Activated CD8-positive, alpha-beta T cell treated with anti-CD3 and anti-CD28 coated beads, Interleukin-2, amount 10 ng/mL, durations not matched to agents 7 days and 5 days (primary cell): ENCODE measurements at regions of chr1 and their contacts with region 1.

Region 1: DNA sequence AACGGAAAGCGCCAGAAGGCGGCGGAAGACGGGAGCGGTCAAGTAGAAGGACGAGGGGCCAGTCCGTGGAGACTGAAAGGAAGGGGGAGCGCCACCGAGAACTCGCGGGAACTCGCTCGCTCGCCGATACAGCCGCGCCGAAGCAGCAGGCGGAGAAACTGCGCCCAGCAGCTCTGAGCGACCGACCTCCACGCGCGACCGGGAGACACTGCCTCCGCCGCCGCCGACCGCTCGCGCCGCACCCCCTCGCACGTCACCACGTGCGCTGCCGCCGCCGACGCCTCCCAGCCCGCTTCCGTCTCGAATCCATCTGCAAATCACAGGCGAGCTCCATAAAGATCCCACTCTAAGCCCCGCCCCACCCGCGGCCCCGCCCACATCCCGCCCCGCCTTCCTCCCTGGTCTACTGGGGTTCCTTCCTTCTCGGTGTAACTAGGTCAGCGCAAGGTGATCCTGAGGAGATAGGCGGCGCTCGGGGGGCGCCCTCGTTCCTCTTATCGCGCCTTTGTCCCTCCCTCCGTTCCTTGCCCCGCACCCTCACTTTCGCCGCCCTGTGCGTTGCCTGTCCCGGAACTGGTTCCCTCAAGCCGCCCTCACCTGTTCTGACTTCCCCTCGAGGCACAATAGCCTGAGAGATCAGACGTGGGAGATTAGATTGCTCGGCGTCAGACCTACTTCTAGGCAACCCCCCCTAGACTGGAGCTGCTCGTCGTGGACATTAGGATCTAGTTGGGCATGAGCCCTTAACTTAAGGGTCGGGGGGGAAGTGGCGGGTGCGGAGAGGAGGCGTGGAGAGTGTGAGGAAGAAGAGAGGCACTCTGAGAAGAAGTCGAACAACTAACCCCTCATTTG is at the start of gene IVNS1ABP:
- DNase-seq: peak; percentile 97
- ATAC-seq: peak; percentile 81
- H3K4me3 Mint-ChIP-seq: peak within 1 kb of the TSS; percentile 90
- H3K27ac Mint-ChIP-seq: peak within 1 kb of the TSS; percentile 94
- H3K4me1 Mint-ChIP-seq: peaks cover 49% of the 10 kb centered on the region
- H3K27me3 Mint-ChIP-seq: no peaks in the 10 kb centered on the region
- total RNA-seq, gene IVNS1ABP: 216 to 234 TPM

Region 2: GRCh38 chr1:185238447-185238846 is 78.8 kb before region 1 on chr1:
- CTCF ChIA-PET with region 1: interaction called, 13 read pairs
- POLR2A ChIA-PET with region 1: interaction called, 17 read pairs
- DNase-seq: no peak
- ATAC-seq: no peak
- H3K4me3 Mint-ChIP-seq: no peak overlapping the region
- H3K27ac Mint-ChIP-seq: no peak overlapping the region
- H3K4me1 Mint-ChIP-seq: peaks cover 17% of the 10 kb centered on the region
- H3K27me3 Mint-ChIP-seq: no peaks in the 10 kb centered on the region

Region 3: GRCh38 chr1:185338719-185339622 is 21.7 kb after region 1 on chr1:
- CTCF ChIA-PET with region 1: interaction called, 27 read pairs
- POLR2A ChIA-PET with region 1: interaction called, 55 read pairs
- DNase-seq: peak; percentile 90
- ATAC-seq: peak; percentile 94
- H3K4me3 Mint-ChIP-seq: peak overlapping the region; percentile 57
- H3K27ac Mint-ChIP-seq: peak overlapping the region; percentile 92
- H3K4me1 Mint-ChIP-seq: peaks cover 64% of the 10 kb centered on the region
- H3K27me3 Mint-ChIP-seq: no peaks in the 10 kb centered on the region

Region 4: GRCh38 chr1:185388346-185388745 is 71.1 kb after region 1 on chr1:
- CTCF ChIA-PET with region 1: no interaction called
- POLR2A ChIA-PET with region 1: no interaction called
- DNase-seq: no peak
- ATAC-seq: no peak
- H3K4me3 Mint-ChIP-seq: no peak overlapping the region
- H3K27ac Mint-ChIP-seq: no peak overlapping the region
- H3K4me1 Mint-ChIP-seq: peaks cover 7% of the 10 kb centered on the region
- H3K27me3 Mint-ChIP-seq: no peaks in the 10 kb centered on the region

Region 5: GRCh38 chr1:185420588-185421081 is 103.4 kb after region 1 on chr1:
- CTCF ChIA-PET with region 1: interaction called, 15 read pairs
- POLR2A ChIA-PET with region 1: interaction called, 87 read pairs
- DNase-seq: peak; percentile 80
- ATAC-seq: peak; percentile 87
- H3K4me3 Mint-ChIP-seq: peak overlapping the region; percentile 60
- H3K27ac Mint-ChIP-seq: peak overlapping the region; percentile 96
- H3K4me1 Mint-ChIP-seq: peaks cover 88% of the 10 kb centered on the region
- H3K27me3 Mint-ChIP-seq: no peaks in the 10 kb centered on the region

Region 6: GRCh38 chr1:185439727-185440415 is 122.6 kb after region 1 on chr1:
- CTCF ChIA-PET with region 1: interaction called, 18 read pairs
- POLR2A ChIA-PET with region 1: interaction called, 72 read pairs
- DNase-seq: peak; percentile 72
- ATAC-seq: peak; percentile 83
- H3K4me3 Mint-ChIP-seq: no peak overlapping the region
- H3K27ac Mint-ChIP-seq: no peak overlapping the region
- H3K4me1 Mint-ChIP-seq: peaks cover 36% of the 10 kb centered on the region
- H3K27me3 Mint-ChIP-seq: no peaks in the 10 kb centered on the region

Region 7: DNA sequence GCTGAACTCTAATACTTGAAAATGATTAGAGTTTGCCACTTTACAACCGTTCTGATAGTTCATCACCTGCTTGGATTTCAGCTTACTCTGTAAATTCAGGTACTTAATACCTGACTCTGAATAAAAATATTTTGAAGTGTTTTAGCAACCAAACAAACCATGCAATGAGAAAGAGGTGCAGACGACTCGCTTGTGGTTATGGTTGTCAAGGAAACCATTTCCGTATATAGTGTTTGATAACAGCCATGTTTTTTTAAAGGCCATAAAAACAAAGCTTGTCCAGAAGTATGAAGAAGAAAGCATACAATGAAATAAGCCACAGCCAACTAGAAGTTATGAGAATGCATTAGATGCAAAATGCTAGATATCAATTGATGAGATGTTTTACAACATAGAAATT is 249.7 kb after region 1 on chr1:
- CTCF ChIA-PET with region 1: interaction called, 46 read pairs
- POLR2A ChIA-PET with region 1: interaction called, 35 read pairs
- DNase-seq: peak; percentile 79
- ATAC-seq: peak; percentile 84
- H3K4me3 Mint-ChIP-seq: peak overlapping the region; percentile 29
- H3K27ac Mint-ChIP-seq: peak overlapping the region; percentile 76
- H3K4me1 Mint-ChIP-seq: peaks cover 70% of the 10 kb centered on the region
- H3K27me3 Mint-ChIP-seq: no peaks in the 10 kb centered on the region

Region 8: DNA sequence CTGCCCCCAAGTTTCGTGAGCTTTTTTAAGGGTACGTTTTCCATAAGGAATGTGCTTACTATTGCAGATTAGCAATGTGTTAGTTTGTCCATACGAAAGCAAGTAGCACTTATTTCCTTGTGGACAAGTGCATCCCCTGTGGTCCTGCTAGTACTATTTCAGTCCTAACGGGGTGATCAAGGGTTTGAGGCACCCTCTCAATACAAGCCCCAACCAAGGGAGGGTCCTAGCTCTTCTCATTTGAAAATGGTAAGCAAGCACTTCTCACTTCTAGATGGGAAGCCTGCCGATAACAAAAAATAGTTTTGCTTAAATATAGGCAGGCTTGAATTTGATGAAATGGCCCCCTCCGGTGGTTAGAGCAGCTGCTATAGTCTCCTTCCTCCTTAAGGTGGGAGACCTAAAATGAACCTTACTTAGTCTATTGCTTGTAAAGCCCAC is 352.9 kb after region 1 on chr1:
- CTCF ChIA-PET with region 1: interaction called, 66 read pairs
- POLR2A ChIA-PET with region 1: interaction called, 16 read pairs
- DNase-seq: peak; percentile 76
- ATAC-seq: peak; percentile 74
- H3K4me3 Mint-ChIP-seq: no peak overlapping the region
- H3K27ac Mint-ChIP-seq: no peak overlapping the region
- H3K4me1 Mint-ChIP-seq: peaks cover 52% of the 10 kb centered on the region
- H3K27me3 Mint-ChIP-seq: no peaks in the 10 kb centered on the region